A549 (cell line): ENCODE measurements at regions of chr10 and their contacts with region 1.

Region 1: GRCh38 chr10:23525406-23525805 is 86.5 kb downstream of the OTUD1 start:
- DNase-seq: peak; percentile 4 to 34
- ATAC-seq: peak; percentile 56 to 77; a peak in 4 of 6 replicates
- H3K4me3 ChIP-seq: no peak overlapping the region
- H3K27ac ChIP-seq: no peak overlapping the region
- H3K4me1 ChIP-seq: no peaks in the 10 kb centered on the region
- CTCF ChIP-seq: peak; percentile 44; the same call in 2 of the 3 replicates
- EP300 ChIP-seq: no peak
- POLR2A ChIP-seq: no peak
- RAD21 ChIP-seq: peak; percentile 61 to 69

Region 2: GRCh38 chr10:23293145-23293724 is 232.2 kb before region 1 on chr10:
- CTCF ChIA-PET with region 1: interaction called, 11 read pairs
- POLR2A ChIA-PET with region 1: no interaction called
- DNase-seq: peak; percentile 10 to 44
- ATAC-seq: peak; percentile 77 to 86; a peak in 4 of 6 replicates
- H3K4me3 ChIP-seq: no peak overlapping the region
- H3K27ac ChIP-seq: no peak overlapping the region
- H3K4me1 ChIP-seq: no peaks in the 10 kb centered on the region
- CTCF ChIP-seq: peak; percentile 54
- EP300 ChIP-seq: no peak
- POLR2A ChIP-seq: no peak
- RAD21 ChIP-seq: peak; percentile 47 to 63; a peak in 4 of 5 replicates

Region 3: DNA sequence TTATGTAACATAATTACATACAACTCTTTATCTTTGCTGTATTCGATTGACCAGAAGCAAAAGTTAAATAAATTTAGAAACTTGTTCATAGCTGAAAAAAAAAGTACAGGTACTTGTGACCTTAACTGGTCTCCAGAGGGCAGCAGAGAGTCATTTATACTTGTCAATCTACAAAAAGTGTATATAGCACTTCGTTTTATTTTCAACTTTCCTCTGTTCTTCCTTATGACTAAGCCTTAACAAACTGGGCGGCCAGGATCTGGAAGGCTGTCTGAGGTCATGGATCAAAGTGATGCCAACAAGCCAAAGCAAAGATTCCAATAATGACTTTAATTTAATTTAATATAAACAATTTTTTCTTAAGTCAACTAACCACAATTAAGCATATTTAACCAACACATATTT is 210.6 kb before region 1 on chr10:
- CTCF ChIA-PET with region 1: interaction called, 176 read pairs
- POLR2A ChIA-PET with region 1: interaction called, 3 read pairs
- DNase-seq: peak; percentile 13 to 74
- ATAC-seq: peak; percentile 79 to 80; a peak in 5 of 6 replicates
- H3K4me3 ChIP-seq: no peak overlapping the region
- H3K27ac ChIP-seq: no peak overlapping the region
- H3K4me1 ChIP-seq: no peaks in the 10 kb centered on the region
- CTCF ChIP-seq: peak; percentile 85
- EP300 ChIP-seq: no peak
- POLR2A ChIP-seq: no peak
- RAD21 ChIP-seq: peak; percentile 79 to 89

Region 4: DNA sequence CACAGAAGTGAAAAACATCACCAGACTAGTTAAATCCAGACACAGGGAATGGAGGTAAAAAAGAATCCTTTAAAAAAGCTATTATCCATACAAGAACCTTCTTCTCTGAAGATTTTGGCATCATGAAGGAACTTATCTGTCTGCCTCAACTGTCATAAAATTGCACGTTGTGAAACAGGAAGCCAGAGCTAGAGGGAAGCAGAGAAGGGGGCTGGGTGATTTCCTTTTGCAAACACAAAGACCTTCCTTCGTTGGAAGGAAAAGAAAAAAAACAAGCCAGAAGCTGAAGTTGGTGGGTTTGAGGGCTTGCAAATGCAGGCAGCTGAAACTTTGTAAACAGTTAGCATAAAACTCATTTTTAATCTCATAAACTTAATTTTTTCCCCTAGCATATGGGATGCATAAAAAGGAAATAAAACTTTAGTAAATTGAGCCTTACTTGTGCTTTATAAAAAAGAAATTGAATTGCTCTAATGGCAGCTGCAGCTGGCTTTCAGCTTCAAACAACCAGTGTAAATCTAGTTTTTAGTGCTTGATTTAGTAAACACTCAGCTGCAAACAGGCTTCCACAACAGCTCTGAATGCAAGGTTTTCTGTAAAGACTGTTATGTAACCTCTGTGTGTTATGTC is 15.1 kb after region 1 on chr10:
- CTCF ChIA-PET with region 1: interaction called, 14 read pairs
- POLR2A ChIA-PET with region 1: no interaction called
- DNase-seq: no peak
- ATAC-seq: no peak
- H3K4me3 ChIP-seq: no peak overlapping the region
- H3K27ac ChIP-seq: no peak overlapping the region
- H3K4me1 ChIP-seq: no peaks in the 10 kb centered on the region
- CTCF ChIP-seq: no peak
- EP300 ChIP-seq: no peak
- POLR2A ChIP-seq: no peak
- RAD21 ChIP-seq: no peak